CD8-positive, alpha-beta memory T cell (primary cell): ENCODE measurements at regions of chr19 and their contacts with region 1.

Region 1: GRCh38 chr19:49570138-49570856 is 10.1 kb downstream of the NOSIP start:
- DNase-seq: peak; percentile 41 to 82 (median 80)
- H3K4me3 ChIP-seq: no peak overlapping the region
- H3K4me3 Mint-ChIP-seq: peak overlapping the region; percentile 62 to 86 (median 67)
- H3K27ac ChIP-seq: peak overlapping the region; percentile 29
- H3K27ac Mint-ChIP-seq: peak overlapping the region; percentile 87 to 96 (median 94)
- H3K4me1 ChIP-seq: peaks cover 57% of the 10 kb centered on the region
- H3K4me1 Mint-ChIP-seq: peaks cover 42 to 62% (median 56%) of the 10 kb centered on the region in 3 donors
- H3K27me3 ChIP-seq: no peaks in the 10 kb centered on the region
- H3K27me3 Mint-ChIP-seq: no peaks in the 10 kb centered on the region

Region 2: DNA sequence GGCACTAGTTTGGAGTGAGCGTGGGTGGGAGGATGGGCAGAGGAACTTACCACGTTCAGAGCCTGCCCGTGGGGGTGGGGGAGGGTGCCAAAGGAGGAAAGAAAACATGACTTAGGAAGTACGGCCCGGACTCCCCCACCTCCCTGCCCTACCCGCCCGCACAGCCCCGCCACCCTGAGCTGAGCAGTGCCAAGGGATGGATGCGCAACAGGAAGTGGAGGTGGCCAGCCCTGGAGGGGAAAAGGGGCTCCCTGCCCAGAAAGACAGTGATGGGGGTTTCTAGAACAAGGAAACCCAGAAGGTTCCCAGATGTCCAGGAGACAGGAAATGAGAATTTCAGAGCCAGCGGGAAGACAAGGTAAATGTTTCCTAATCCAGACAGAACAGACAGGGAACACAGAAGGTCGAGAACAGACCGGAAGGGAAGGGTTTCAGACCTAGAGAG is 214.4 kb before region 1 on chr19:
- CTCF ChIA-PET with region 1: no interaction called
- POLR2A ChIA-PET with region 1: no interaction called
- DNase-seq: no peak
- H3K4me3 ChIP-seq: no peak overlapping the region
- H3K4me3 Mint-ChIP-seq: no peak overlapping the region
- H3K27ac ChIP-seq: no peak overlapping the region
- H3K27ac Mint-ChIP-seq: peak overlapping the region in 1 of 8 donors; percentile 61
- H3K4me1 ChIP-seq: no peaks in the 10 kb centered on the region
- H3K4me1 Mint-ChIP-seq: peaks cover 5 to 13% (median 9%) of the 10 kb centered on the region in 3 donors
- H3K27me3 ChIP-seq: no peaks in the 10 kb centered on the region
- H3K27me3 Mint-ChIP-seq: peaks cover 22 to 55% of the 10 kb centered on the region in 2 donors

Region 3: DNA sequence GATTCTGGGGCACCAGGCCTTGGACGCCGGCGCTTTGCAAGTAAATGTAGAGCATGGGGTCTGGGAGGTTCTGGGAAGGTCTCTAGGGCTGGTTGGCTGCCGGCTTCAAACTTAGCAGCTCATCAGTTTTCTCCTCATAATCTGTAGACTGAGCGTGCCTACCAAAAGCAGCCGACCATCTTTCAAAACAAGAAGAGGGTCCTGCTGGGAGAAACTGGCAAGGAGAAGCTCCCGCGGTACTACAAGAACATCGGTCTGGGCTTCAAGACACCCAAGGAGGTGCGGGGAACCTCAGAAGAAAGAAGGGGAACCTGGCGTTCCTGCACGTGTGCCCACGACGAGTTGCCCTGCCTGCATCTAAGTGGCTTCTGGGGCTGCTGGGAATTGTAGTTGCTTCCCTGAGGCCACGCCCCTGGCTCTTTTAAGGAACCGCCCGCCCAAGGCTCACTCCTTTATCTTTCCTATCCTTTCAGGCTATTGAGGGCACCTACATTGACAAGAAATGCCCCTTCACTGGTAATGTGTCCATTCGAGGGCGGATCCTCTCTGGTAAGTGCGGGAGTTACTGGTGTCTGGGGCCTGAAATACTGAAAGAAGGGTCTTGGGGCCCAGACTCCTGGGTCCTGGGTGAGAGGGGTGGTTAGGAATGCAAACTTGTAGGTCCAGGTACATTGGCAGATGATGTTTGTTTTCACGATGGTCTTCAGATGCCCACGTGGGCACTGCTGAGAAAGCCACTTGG is 73.1 kb before region 1 on chr19:
- CTCF ChIA-PET with region 1: interaction called, 6 read pairs
- POLR2A ChIA-PET with region 1: interaction called, 10 read pairs
- DNase-seq: peak; percentile 66 to 83 (median 74)
- H3K4me3 ChIP-seq: peak overlapping the region; percentile 95
- H3K4me3 Mint-ChIP-seq: peak overlapping the region; percentile 95 to 100 (median 100)
- H3K27ac ChIP-seq: peak overlapping the region; percentile 94
- H3K27ac Mint-ChIP-seq: peak overlapping the region; percentile 88 to 99 (median 98)
- H3K4me1 ChIP-seq: peaks cover 49% of the 10 kb centered on the region
- H3K4me1 Mint-ChIP-seq: peaks cover 58 to 70% (median 67%) of the 10 kb centered on the region in 3 donors
- H3K27me3 ChIP-seq: no peaks in the 10 kb centered on the region
- H3K27me3 Mint-ChIP-seq: peaks cover 0 to 19% of the 10 kb centered on the region in 2 donors

Region 4: DNA sequence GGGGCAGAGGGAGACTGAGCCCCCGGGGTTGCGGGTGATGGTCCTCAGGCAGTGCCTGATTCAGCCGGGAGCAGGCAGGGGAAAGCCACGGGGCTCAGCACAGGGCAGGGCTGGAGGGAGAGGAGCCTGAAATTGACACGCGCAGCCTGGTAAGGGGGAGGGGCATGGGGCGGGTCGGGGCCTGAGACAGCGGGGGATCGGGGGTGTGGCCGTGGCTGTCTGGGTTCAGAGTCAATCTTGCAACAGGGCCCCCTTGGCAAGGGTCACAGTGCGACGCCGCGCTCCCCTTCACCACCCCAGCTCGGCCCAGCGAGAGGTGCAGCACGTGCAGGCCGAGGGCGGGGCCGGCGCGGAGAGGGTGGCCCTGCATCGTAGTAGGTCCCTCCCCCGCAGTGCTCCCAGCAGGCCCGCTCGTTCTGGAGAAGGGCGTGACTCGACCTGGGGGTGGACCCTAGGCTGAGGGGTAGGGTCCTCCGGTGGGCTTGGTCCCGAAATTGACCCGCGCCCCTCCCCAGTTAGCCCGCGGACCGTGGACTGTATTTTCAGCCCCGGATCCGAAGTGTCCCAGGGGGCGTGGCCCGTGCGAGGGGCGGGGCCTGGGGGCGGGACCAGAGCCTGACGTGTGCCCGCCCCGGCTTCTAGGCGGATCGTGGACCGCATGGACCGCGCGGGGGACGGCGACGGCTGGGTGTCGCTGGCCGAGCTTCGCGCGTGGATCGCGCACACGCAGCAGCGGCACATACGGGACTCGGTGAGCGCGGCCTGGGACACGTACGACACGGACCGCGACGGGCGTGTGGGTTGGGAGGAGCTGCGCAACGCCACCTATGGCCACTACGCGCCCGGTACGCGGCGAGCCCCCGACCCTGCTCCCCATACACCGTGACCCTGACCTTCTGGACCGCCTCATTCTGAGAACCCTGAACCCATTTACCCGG is 36.5 kb before region 1 on chr19:
- CTCF ChIA-PET with region 1: interaction called, 19 read pairs
- POLR2A ChIA-PET with region 1: interaction called, 4 read pairs
- DNase-seq: peak; percentile 83 to 88 (median 84)
- H3K4me3 ChIP-seq: peak overlapping the region; percentile 64
- H3K4me3 Mint-ChIP-seq: peak overlapping the region; percentile 78 to 94 (median 87)
- H3K27ac ChIP-seq: no peak overlapping the region
- H3K27ac Mint-ChIP-seq: peak overlapping the region; percentile 59 to 91 (median 88)
- H3K4me1 ChIP-seq: peaks cover 22% of the 10 kb centered on the region
- H3K4me1 Mint-ChIP-seq: peaks cover 18 to 26% (median 20%) of the 10 kb centered on the region in 3 donors
- H3K27me3 ChIP-seq: no peaks in the 10 kb centered on the region
- H3K27me3 Mint-ChIP-seq: peaks cover 0 to 4% of the 10 kb centered on the region in 2 donors

Region 5: GRCh38 chr19:49555600-49556411 is 14.5 kb before region 1 on chr19:
- CTCF ChIA-PET with region 1: interaction called, 128 read pairs
- POLR2A ChIA-PET with region 1: interaction called, 21 read pairs
- DNase-seq: peak; percentile 66 to 89 (median 74)
- H3K4me3 ChIP-seq: peak overlapping the region; percentile 37
- H3K4me3 Mint-ChIP-seq: peak overlapping the region in 6 of 7 donors; percentile 54 to 84 (median 71)
- H3K27ac ChIP-seq: no peak overlapping the region
- H3K27ac Mint-ChIP-seq: peak overlapping the region in 6 of 8 donors; percentile 79 to 99 (median 88)
- H3K4me1 ChIP-seq: peaks cover 88% of the 10 kb centered on the region
- H3K4me1 Mint-ChIP-seq: peaks cover 69 to 75% (median 71%) of the 10 kb centered on the region in 3 donors
- H3K27me3 ChIP-seq: no peaks in the 10 kb centered on the region
- H3K27me3 Mint-ChIP-seq: peaks cover 0 to 4% of the 10 kb centered on the region in 2 donors

Region 6: GRCh38 chr19:49676690-49677231 is 106.5 kb after region 1 on chr19:
- CTCF ChIA-PET with region 1: interaction called, 56 read pairs
- POLR2A ChIA-PET with region 1: interaction called, 4 read pairs
- DNase-seq: peak; percentile 97 to 99 (median 98)
- H3K4me3 ChIP-seq: peak overlapping the region; percentile 88
- H3K4me3 Mint-ChIP-seq: peak overlapping the region; percentile 90 to 100 (median 99)
- H3K27ac ChIP-seq: peak overlapping the region; percentile 95
- H3K27ac Mint-ChIP-seq: peak overlapping the region; percentile 92 to 100 (median 99)
- H3K4me1 ChIP-seq: peaks cover 37% of the 10 kb centered on the region
- H3K4me1 Mint-ChIP-seq: peaks cover 34 to 56% (median 38%) of the 10 kb centered on the region in 3 donors
- H3K27me3 ChIP-seq: no peaks in the 10 kb centered on the region
- H3K27me3 Mint-ChIP-seq: peaks cover 0 to 2% of the 10 kb centered on the region in 2 donors